T-cell (primary cell): ENCODE measurements at regions of chr15 and their contacts with region 1.

Region 1: DNA sequence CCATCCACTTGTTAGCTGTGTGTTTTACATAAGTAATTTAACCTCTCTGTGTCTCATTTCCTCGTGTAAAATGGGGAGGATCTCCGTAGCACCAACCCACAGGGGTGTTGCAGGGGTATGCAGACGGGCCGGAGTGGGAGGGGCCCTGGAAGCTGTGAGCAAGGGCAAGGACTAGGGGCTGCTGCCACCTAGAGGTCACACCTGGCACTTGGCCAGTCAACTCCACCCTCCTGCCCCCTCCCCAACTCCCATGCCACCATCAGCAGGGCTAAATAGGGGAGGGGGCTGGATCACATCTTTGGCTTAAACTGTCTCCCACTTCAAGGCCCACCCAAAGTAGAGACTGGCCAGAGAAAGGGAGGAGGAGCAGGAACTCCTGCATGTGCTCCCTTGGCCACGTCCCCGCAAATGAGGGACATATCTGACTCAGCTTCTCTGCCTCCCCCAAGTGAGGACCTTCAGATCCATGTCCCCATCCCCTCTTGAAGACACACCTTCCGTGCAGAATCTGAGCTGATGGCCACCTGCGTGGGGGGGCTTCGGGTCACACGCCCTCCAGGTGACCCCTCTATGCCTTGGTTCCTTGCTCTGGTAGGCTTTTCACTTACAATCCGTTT is 2.6 kb downstream of the CCDC9B start:
- DNase-seq: peak; percentile 44 to 87 (median 70)
- ATAC-seq: peak; percentile 80 to 89 (median 86)
- H3K4me3 ChIP-seq: no peak overlapping the region
- H3K4me3 Mint-ChIP-seq: no peak overlapping the region
- H3K27ac ChIP-seq: no peak overlapping the region
- H3K27ac Mint-ChIP-seq: no peak overlapping the region
- H3K4me1 ChIP-seq: peaks cover 11 to 33% of the 10 kb centered on the region in 2 experiments
- H3K4me1 Mint-ChIP-seq: peaks cover 17 to 22% (median 20%) of the 10 kb centered on the region in 3 donors
- H3K27me3 ChIP-seq: peaks cover 0 to 17% of the 10 kb centered on the region in 2 experiments
- H3K27me3 Mint-ChIP-seq: no peaks in the 10 kb centered on the region

Region 2: GRCh38 chr15:40238532-40239403 is 99.4 kb before region 1 on chr15 and contains the start of gene PAK6:
- CTCF ChIA-PET with region 1: interaction called in 1 of 2 experiments, 10 read pairs
- POLR2A ChIA-PET with region 1: no interaction called
- DNase-seq: peak in 9 of 35 experiments; percentile 2 to 27 (median 12)
- ATAC-seq: peak in 1 of 4 experiments; percentile 47
- H3K4me3 ChIP-seq: peak within 1 kb of the TSS in 1 of 2 donors; percentile 46
- H3K4me3 Mint-ChIP-seq: peak within 1 kb of the TSS; percentile 17 to 49 (median 46)
- H3K27ac ChIP-seq: no peak within 1 kb of the TSS
- H3K27ac Mint-ChIP-seq: peak within 1 kb of the TSS in 1 of 2 donors; percentile 33
- H3K4me1 ChIP-seq: peaks cover 0 to 11% of the 10 kb centered on the region in 2 experiments
- H3K4me1 Mint-ChIP-seq: peaks cover 6 to 9% (median 9%) of the 10 kb centered on the region in 3 donors
- H3K27me3 ChIP-seq: peaks cover 0 to 44% of the 10 kb centered on the region in 2 experiments
- H3K27me3 Mint-ChIP-seq: peaks cover 16 to 30% of the 10 kb centered on the region in 2 donors
- total RNA-seq, gene PAK6: 0.28 to 2.1 (median 1.4) TPM in 3 of 5 donors, not detected in the others

Region 3: GRCh38 chr15:40307421-40308211 is 30.5 kb before region 1 on chr15 and contains the start of gene PLCB2:
- CTCF ChIA-PET with region 1: interaction called, 20 to 28 read pairs
- POLR2A ChIA-PET with region 1: no interaction called
- DNase-seq: peak; percentile 49 to 84 (median 71)
- ATAC-seq: peak; percentile 81 to 85 (median 83)
- H3K4me3 ChIP-seq: peak within 1 kb of the TSS; percentile 90 to 98
- H3K4me3 Mint-ChIP-seq: peak within 1 kb of the TSS; percentile 84 to 97 (median 92)
- H3K27ac ChIP-seq: peak within 1 kb of the TSS; percentile 92
- H3K27ac Mint-ChIP-seq: peak within 1 kb of the TSS; percentile 98 to 99
- H3K4me1 ChIP-seq: peaks cover 7 to 58% of the 10 kb centered on the region in 2 experiments
- H3K4me1 Mint-ChIP-seq: peaks cover 43 to 55% (median 51%) of the 10 kb centered on the region in 3 donors
- H3K27me3 ChIP-seq: no peaks in the 10 kb centered on the region
- H3K27me3 Mint-ChIP-seq: no peaks in the 10 kb centered on the region
- total RNA-seq, gene PLCB2: 242 to 293 (median 245) TPM

Region 4: GRCh38 chr15:40323239-40323952 is 14.8 kb before region 1 on chr15 and contains the start of gene INAFM2:
- CTCF ChIA-PET with region 1: interaction called, 13 to 30 read pairs
- POLR2A ChIA-PET with region 1: interaction called in 1 of 2 experiments, 3 read pairs
- DNase-seq: peak; percentile 79 to 95 (median 89)
- ATAC-seq: peak; percentile 87 to 90 (median 88)
- H3K4me3 ChIP-seq: peak within 1 kb of the TSS; percentile 50 to 58
- H3K4me3 Mint-ChIP-seq: peak within 1 kb of the TSS; percentile 76 to 81 (median 77)
- H3K27ac ChIP-seq: peak within 1 kb of the TSS; percentile 55
- H3K27ac Mint-ChIP-seq: peak within 1 kb of the TSS; percentile 76 to 83
- H3K4me1 ChIP-seq: peaks cover 6 to 32% of the 10 kb centered on the region in 2 experiments
- H3K4me1 Mint-ChIP-seq: peaks cover 34% of the 10 kb centered on the region in 3 donors
- H3K27me3 ChIP-seq: no peaks in the 10 kb centered on the region
- H3K27me3 Mint-ChIP-seq: peaks cover 0 to 5% of the 10 kb centered on the region in 2 donors
- total RNA-seq, gene INAFM2: 5.5 to 10.9 (median 6.4) TPM